Panc1 (cell line): ENCODE measurements at regions of chrX and their contacts with region 1.

Region 1: GRCh38 chrX:115665122-115665521 is 104.1 kb downstream of the PLS3 start:
- DNase-seq: no peak
- ATAC-seq: no peak
- H3K4me3 ChIP-seq: no peak overlapping the region
- H3K27ac ChIP-seq: no peak overlapping the region
- H3K4me1 ChIP-seq: no peaks in the 10 kb centered on the region
- H3K27me3 ChIP-seq: no peaks in the 10 kb centered on the region
- CTCF ChIP-seq: no peak

Region 2: GRCh38 chrX:115459883-115460880 is 204.9 kb before region 1 on chrX:
- CTCF ChIA-PET with region 1: no interaction called
- POLR2A ChIA-PET with region 1: no interaction called
- in situ Hi-C with region 1: no loop called
- intact Hi-C with region 1: no loop called
- DNase-seq: no peak
- ATAC-seq: no peak
- H3K4me3 ChIP-seq: no peak overlapping the region
- H3K27ac ChIP-seq: no peak overlapping the region
- H3K4me1 ChIP-seq: no peaks in the 10 kb centered on the region
- H3K27me3 ChIP-seq: peaks cover 4% of the 10 kb centered on the region; the same call in 1 of the 2 replicates
- CTCF ChIP-seq: no peak

Region 3: DNA sequence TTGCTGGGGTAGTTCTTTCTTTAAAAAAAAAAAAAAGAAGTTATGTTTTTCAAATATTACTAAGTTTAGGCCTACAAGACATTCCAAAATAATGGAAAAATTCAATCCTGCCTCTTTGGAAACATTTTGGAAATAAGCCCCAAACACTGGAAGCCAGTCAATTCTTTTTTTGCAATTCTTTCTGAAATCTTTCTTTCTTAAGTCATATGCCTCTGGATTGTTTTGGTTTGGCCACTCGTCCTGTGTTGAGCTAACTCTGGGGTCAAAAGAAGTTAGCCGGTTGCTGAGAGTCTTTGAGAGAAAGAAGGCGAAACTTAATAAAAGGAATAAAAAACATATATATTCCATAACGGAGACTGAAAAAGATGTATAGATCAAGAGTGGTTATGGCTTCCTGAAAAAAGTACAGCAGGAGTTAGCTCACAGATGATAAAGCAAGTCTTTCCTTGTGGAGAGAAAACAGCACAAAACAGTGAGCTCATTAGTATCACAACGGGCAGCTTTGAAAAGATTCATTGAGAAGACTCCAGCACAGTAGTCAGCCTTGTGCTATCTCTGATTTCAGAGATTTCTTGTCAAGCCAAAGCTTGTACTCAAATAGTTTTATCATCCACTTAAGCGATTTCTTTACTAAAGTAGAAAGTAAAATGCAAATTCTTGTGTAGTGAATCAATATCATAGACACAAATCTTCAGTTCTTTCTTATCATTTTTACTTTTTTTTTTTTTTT is 39.4 kb before region 1 on chrX:
- CTCF ChIA-PET with region 1: interaction called, 10 read pairs
- POLR2A ChIA-PET with region 1: no interaction called
- in situ Hi-C with region 1: no loop called
- intact Hi-C with region 1: no loop called
- DNase-seq: no peak
- ATAC-seq: no peak
- H3K4me3 ChIP-seq: no peak overlapping the region
- H3K27ac ChIP-seq: no peak overlapping the region
- H3K4me1 ChIP-seq: no peaks in the 10 kb centered on the region
- H3K27me3 ChIP-seq: no peaks in the 10 kb centered on the region
- CTCF ChIP-seq: no peak

Region 4: GRCh38 chrX:115642895-115643530 is 22.1 kb before region 1 on chrX:
- CTCF ChIA-PET with region 1: no interaction called
- POLR2A ChIA-PET with region 1: no interaction called
- in situ Hi-C with region 1: no loop called
- intact Hi-C with region 1: no loop called
- DNase-seq: no peak
- ATAC-seq: no peak
- H3K4me3 ChIP-seq: no peak overlapping the region
- H3K27ac ChIP-seq: no peak overlapping the region
- H3K4me1 ChIP-seq: no peaks in the 10 kb centered on the region
- H3K27me3 ChIP-seq: no peaks in the 10 kb centered on the region
- CTCF ChIP-seq: peak; percentile 82; the same call in 1 of the 2 replicates

Region 5: GRCh38 chrX:115719166-115719565 is 54.0 kb after region 1 on chrX:
- CTCF ChIA-PET with region 1: no interaction called
- POLR2A ChIA-PET with region 1: no interaction called
- in situ Hi-C with region 1: no loop called
- intact Hi-C with region 1: no loop called
- DNase-seq: no peak
- ATAC-seq: no peak
- H3K4me3 ChIP-seq: no peak overlapping the region
- H3K27ac ChIP-seq: no peak overlapping the region
- H3K4me1 ChIP-seq: no peaks in the 10 kb centered on the region
- H3K27me3 ChIP-seq: no peaks in the 10 kb centered on the region
- CTCF ChIP-seq: no peak

Region 6: GRCh38 chrX:116462827-116463226 is 797.7 kb after region 1 on chrX and contains the start of gene CT83:
- CTCF ChIA-PET with region 1: no interaction called
- POLR2A ChIA-PET with region 1: no interaction called
- in situ Hi-C with region 1: no loop called
- intact Hi-C with region 1: no loop called
- DNase-seq: no peak
- ATAC-seq: no peak
- H3K4me3 ChIP-seq: no peak within 1 kb of the TSS
- H3K27ac ChIP-seq: no peak within 1 kb of the TSS
- H3K4me1 ChIP-seq: no peaks in the 10 kb centered on the region
- H3K27me3 ChIP-seq: no peaks in the 10 kb centered on the region
- CTCF ChIP-seq: no peak
- total RNA-seq, gene CT83: not detected